ENCODE measurements at regions of chr12 and their contacts with region 1.

Region 1: DNA sequence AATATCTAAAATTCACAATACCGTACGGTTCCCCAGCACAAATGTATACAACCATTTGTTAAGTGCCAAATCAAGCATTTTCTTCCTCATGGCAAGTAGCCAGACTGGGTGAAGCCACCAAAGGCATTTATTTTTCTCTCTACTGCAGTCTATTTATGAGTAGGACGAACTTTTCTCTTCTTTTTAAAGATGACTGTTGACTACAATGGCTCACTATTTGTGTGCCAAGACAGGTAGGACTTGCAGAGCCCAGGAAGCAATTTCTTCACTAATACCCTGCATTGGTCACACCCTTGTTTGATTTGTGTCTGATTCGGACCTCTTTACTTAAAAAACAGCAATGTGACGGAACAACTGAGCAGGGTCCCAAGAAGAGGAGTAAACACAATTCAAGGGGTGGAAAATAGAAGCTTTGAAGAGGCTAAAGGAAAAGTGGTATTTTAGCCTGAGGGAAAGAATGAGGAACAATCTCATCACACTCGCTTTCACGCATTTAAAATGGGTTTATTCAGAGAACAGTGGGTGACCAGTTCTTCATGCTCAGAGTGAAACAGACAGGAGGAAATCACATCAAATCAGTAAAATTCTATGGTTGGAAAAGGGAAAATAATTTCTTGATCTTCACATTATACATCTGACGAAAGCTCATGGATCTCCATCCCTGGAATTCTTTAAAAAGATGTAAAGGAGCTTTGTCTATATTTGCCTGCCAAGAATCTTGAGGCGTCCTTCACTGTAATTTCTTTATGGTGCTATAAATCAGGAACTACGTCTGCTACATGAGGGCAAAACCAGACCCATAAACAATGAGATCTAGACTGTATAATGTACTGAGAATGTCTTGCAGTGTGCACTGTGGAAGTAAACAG is 183.8 kb downstream of the PPM1H start:
- DNase-seq: no peak
- H3K4me3 Mint-ChIP-seq: no peak overlapping the region
- H3K27ac Mint-ChIP-seq: no peak overlapping the region
- H3K4me1 Mint-ChIP-seq: no peaks in the 10 kb centered on the region
- H3K27me3 Mint-ChIP-seq: peaks cover 25% of the 10 kb centered on the region

Region 2: DNA sequence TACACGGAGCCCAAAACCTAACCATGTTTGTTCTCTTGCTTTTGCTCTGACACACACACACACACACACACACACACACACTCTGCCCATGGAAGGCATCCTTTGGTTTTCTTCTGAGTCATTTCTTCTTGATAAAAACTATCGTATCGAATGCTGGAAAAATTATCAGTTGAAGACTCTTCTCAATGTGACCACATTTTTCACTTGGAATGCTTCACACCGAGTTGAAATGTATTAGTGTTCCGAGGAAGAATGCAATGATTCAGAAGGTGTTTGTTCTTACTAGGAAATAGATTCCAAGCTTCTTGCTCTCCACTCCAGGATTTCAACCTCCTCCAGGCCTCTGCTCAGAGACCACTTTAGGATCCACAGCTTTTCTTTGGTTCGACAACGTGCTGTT is 58.3 kb before region 1 on chr12:
- intact Hi-C with region 1: no loop called
- DNase-seq: no peak
- H3K4me3 Mint-ChIP-seq: no peak overlapping the region
- H3K27ac Mint-ChIP-seq: no peak overlapping the region
- H3K4me1 Mint-ChIP-seq: peaks cover 26% of the 10 kb centered on the region
- H3K27me3 Mint-ChIP-seq: peaks cover 18% of the 10 kb centered on the region

Region 3: GRCh38 chr12:62785941-62786559 is 34.9 kb after region 1 on chr12:
- intact Hi-C with region 1: loop called (anchors 5 kb)
- DNase-seq: no peak
- H3K4me3 Mint-ChIP-seq: no peak overlapping the region
- H3K27ac Mint-ChIP-seq: no peak overlapping the region
- H3K4me1 Mint-ChIP-seq: peaks cover 14% of the 10 kb centered on the region
- H3K27me3 Mint-ChIP-seq: peaks cover 9% of the 10 kb centered on the region

Measured in activated T-helper 1 cell treated with anti-CD3 and anti-CD28 coated beads, Interleukin-12 subunit alpha, Interleukin-12 subunit beta, Interleukin-2, Interleukin-4 antibody, amounts not matched to agents 30 ng/mL and 10 ng/mL and 1 ng/mL, durations not matched to agents 14 hours and 24 hours and 36 hours (primary cell).